ENCODE measurements at regions of chr6 and their contacts with region 1.

Region 1: GRCh38 chr6:28940858-28941680 is 17.3 kb upstream of the TRIM27 start:
- DNase-seq: peak; percentile 90
- ATAC-seq: peak; percentile 70
- H3K4me3 ChIP-seq: peak overlapping the region; percentile 55 to 99 (median 83)
- H3K4me3 Mint-ChIP-seq: peak overlapping the region; percentile 95
- H3K27ac ChIP-seq: peak overlapping the region; percentile 46 to 69
- H3K27ac Mint-ChIP-seq: peak overlapping the region; percentile 92
- H3K4me1 ChIP-seq: peaks cover 29 to 39% of the 10 kb centered on the region in 2 donors
- H3K4me1 Mint-ChIP-seq: peaks cover 44% of the 10 kb centered on the region
- H3K27me3 ChIP-seq: peaks cover 0 to 4% (median 0%) of the 10 kb centered on the region in 4 experiments
- H3K27me3 Mint-ChIP-seq: no peaks in the 10 kb centered on the region
- CTCF ChIP-seq: no peak

Region 2: GRCh38 chr6:27479319-27480182 is 1461.5 kb before region 1 on chr6:
- CTCF ChIA-PET with region 1: no interaction called
- POLR2A ChIA-PET with region 1: no interaction called
- intact Hi-C with region 1: loop called (anchors 5 kb)
- DNase-seq: peak; percentile 96
- ATAC-seq: peak; percentile 77
- H3K4me3 ChIP-seq: peak overlapping the region; percentile 88 to 97 (median 95)
- H3K4me3 Mint-ChIP-seq: no peak overlapping the region
- H3K27ac ChIP-seq: peak overlapping the region; percentile 98
- H3K27ac Mint-ChIP-seq: no peak overlapping the region
- H3K4me1 ChIP-seq: peaks cover 15 to 17% of the 10 kb centered on the region in 2 donors
- H3K4me1 Mint-ChIP-seq: peaks cover 6% of the 10 kb centered on the region
- H3K27me3 ChIP-seq: no peaks in the 10 kb centered on the region
- H3K27me3 Mint-ChIP-seq: no peaks in the 10 kb centered on the region
- CTCF ChIP-seq: no peak

Region 3: DNA sequence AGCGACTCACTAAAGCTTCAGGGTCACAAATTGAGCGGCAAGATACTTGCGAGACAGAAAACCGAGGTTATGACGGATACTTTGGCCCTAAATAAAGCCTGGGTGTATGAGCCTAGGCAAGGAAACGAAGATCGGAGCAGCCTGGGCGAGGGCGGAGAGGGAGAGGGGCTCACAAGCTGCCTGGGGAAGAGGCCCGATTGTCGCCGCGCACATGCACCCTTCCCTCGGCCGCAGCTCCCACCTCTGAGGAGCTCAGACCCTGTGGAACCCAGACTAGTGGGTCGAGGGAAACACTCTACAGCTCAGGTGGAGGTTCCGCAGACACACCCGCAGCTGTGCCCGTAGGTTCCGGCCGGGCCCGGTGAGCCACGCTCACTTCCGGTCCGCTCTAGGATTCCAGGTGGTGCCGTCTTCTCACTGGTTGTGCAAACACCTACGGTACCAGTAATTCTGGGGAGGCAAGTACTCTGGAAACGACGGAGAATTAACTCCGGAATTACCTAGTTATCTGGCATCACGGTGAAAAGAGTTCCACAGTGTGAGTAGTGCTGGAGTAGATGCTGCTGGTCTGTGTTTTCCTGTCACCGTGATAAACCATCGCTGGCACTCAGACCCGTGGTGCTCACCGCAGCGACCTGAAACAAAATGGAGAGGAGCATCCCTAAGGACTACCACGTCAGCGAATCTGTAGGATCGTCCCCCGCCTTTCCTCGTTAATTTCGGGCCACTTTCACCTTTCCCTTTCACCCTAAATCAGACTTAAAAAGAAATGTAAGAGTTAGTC is 353.9 kb before region 1 on chr6:
- CTCF ChIA-PET with region 1: no interaction called
- POLR2A ChIA-PET with region 1: no interaction called
- intact Hi-C with region 1: no loop called
- DNase-seq: peak; percentile 73
- ATAC-seq: peak; percentile 79
- H3K4me3 ChIP-seq: peak overlapping the region; percentile 7 to 65 (median 43)
- H3K4me3 Mint-ChIP-seq: peak overlapping the region; percentile 88
- H3K27ac ChIP-seq: no peak overlapping the region
- H3K27ac Mint-ChIP-seq: no peak overlapping the region
- H3K4me1 ChIP-seq: peaks cover 18 to 20% of the 10 kb centered on the region in 2 donors
- H3K4me1 Mint-ChIP-seq: peaks cover 23% of the 10 kb centered on the region
- H3K27me3 ChIP-seq: peaks cover 3 to 68% (median 58%) of the 10 kb centered on the region in 4 experiments
- H3K27me3 Mint-ChIP-seq: peaks cover 75% of the 10 kb centered on the region
- CTCF ChIP-seq: no peak

Region 4: GRCh38 chr6:28794175-28795002 is 146.7 kb before region 1 on chr6:
- CTCF ChIA-PET with region 1: no interaction called
- POLR2A ChIA-PET with region 1: no interaction called
- intact Hi-C with region 1: no loop called
- DNase-seq: peak; percentile 39
- ATAC-seq: no peak
- H3K4me3 ChIP-seq: no peak overlapping the region
- H3K4me3 Mint-ChIP-seq: peak overlapping the region; percentile 49
- H3K27ac ChIP-seq: no peak overlapping the region
- H3K27ac Mint-ChIP-seq: no peak overlapping the region
- H3K4me1 ChIP-seq: peaks cover 6 to 12% of the 10 kb centered on the region in 2 donors
- H3K4me1 Mint-ChIP-seq: peaks cover 10% of the 10 kb centered on the region
- H3K27me3 ChIP-seq: peaks cover 0 to 68% (median 55%) of the 10 kb centered on the region in 4 experiments
- H3K27me3 Mint-ChIP-seq: peaks cover 76% of the 10 kb centered on the region
- CTCF ChIP-seq: no peak

Region 5: DNA sequence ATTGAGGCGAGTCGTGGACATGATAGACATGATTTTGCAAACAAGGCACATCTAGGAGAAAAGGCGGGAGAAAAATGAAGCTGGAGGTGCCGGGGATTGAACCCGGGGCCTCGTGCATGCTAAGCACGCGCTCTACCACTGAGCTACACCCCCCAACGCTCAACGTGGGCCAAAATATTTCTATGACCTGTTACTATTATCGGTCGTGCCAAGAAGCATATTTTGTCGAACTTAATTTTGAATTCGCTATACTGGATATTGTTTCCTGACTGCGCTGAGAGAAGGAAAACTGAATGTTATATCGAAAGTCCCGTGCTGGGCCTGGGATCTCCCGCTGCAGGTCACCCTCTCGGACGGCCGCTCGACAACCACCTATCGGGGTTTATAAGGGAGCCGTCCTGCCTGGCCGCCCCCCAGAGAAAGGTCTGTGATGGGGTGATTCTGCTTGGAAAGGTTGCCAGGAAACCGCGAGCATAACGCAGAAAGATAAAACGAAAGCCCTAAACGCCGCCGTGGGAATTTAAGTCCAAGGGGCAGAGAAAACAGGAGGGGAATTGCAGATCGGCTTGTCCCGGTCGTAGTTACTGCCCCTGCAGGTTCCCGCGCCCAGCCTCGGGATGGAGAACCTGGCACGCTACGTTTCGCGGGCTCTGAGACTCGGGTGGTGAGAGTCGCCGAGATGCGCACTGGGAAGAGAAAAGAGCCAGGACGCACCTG is 77.3 kb before region 1 on chr6:
- CTCF ChIA-PET with region 1: interaction called, 3 read pairs
- POLR2A ChIA-PET with region 1: no interaction called
- intact Hi-C with region 1: loop called (anchors 2 kb)
- DNase-seq: peak; percentile 88
- ATAC-seq: peak; percentile 26
- H3K4me3 ChIP-seq: peak overlapping the region; percentile 54 to 78 (median 75)
- H3K4me3 Mint-ChIP-seq: peak overlapping the region; percentile 83
- H3K27ac ChIP-seq: no peak overlapping the region
- H3K27ac Mint-ChIP-seq: peak overlapping the region; percentile 94
- H3K4me1 ChIP-seq: peaks cover 14 to 24% of the 10 kb centered on the region in 2 donors
- H3K4me1 Mint-ChIP-seq: peaks cover 28% of the 10 kb centered on the region
- H3K27me3 ChIP-seq: peaks cover 0 to 4% (median 0%) of the 10 kb centered on the region in 4 experiments
- H3K27me3 Mint-ChIP-seq: peaks cover 10% of the 10 kb centered on the region
- CTCF ChIP-seq: no peak

Region 6: DNA sequence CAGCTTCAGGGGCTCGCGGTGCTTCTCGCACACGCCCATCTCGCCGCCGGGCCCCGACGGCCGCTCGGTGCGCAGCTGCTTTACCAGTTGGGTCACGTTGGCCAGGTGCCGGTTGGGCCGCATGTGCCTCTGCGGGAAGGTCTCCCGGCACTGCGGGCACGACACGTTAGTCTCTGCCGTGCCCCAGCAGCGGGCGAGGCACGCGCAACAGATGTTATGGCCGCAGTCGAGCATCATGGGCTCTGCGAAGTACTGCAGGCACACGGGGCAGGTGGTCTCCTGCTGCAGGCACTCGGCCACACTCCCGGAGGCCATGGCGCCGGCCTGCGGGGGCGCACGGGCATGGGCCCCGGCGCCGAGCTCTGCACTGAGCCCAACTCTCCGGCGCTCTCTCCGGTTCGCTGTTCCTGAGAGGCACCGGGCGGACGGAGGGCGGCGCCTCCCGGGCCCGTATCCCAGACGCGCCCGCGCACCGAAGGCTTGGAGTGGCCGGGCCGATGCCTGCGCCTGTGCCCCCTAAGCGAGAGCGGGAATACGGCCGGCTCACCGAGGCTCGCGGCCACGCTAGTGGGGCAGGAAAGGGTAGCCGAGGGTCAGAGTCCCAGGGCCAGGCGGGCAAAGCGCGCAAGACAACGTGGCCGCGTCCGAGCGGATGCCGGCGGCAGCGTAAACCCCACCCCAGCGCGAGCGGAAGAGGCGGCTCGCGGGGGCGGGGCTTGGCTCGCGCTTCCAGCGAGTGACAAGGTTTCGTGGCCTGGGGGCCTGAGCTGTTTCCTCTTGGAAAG is 17.6 kb before region 1 on chr6 and contains the start of gene TRIM27:
- CTCF ChIA-PET with region 1: interaction called, 9 read pairs
- POLR2A ChIA-PET with region 1: interaction called, 14 read pairs
- intact Hi-C with region 1: loop called (anchors 1 kb)
- DNase-seq: peak; percentile 90
- ATAC-seq: peak; percentile 86
- H3K4me3 ChIP-seq: peak within 1 kb of the TSS; percentile 71 to 97 (median 92)
- H3K4me3 Mint-ChIP-seq: peak within 1 kb of the TSS; percentile 90
- H3K27ac ChIP-seq: peak within 1 kb of the TSS; percentile 81 to 83
- H3K27ac Mint-ChIP-seq: peak within 1 kb of the TSS; percentile 97
- H3K4me1 ChIP-seq: peaks cover 30% of the 10 kb centered on the region in 2 donors
- H3K4me1 Mint-ChIP-seq: peaks cover 34% of the 10 kb centered on the region
- H3K27me3 ChIP-seq: no peaks in the 10 kb centered on the region
- H3K27me3 Mint-ChIP-seq: no peaks in the 10 kb centered on the region
- CTCF ChIP-seq: peak; percentile 21
- total RNA-seq, gene TRIM27: 66.7 and 70.0 TPM in 2 replicates

Region 7: GRCh38 chr6:29016559-29017427 is 75.7 kb after region 1 on chr6:
- CTCF ChIA-PET with region 1: interaction called, 5 read pairs
- POLR2A ChIA-PET with region 1: no interaction called
- intact Hi-C with region 1: loop called (anchors 1 kb)
- DNase-seq: peak; percentile 90
- ATAC-seq: peak; percentile 84
- H3K4me3 ChIP-seq: peak overlapping the region; percentile 37 to 67 (median 57)
- H3K4me3 Mint-ChIP-seq: peak overlapping the region; percentile 85
- H3K27ac ChIP-seq: no peak overlapping the region
- H3K27ac Mint-ChIP-seq: peak overlapping the region; percentile 47
- H3K4me1 ChIP-seq: peaks cover 11 to 16% of the 10 kb centered on the region in 2 donors
- H3K4me1 Mint-ChIP-seq: peaks cover 19% of the 10 kb centered on the region
- H3K27me3 ChIP-seq: peaks cover 0 to 48% (median 32%) of the 10 kb centered on the region in 4 experiments
- H3K27me3 Mint-ChIP-seq: peaks cover 47% of the 10 kb centered on the region
- CTCF ChIP-seq: peak; percentile 91

Measured in B cell (primary cell).